Heart right ventricle (tissue), 16 donors: ENCODE measurements at regions of chr1 and their contacts with region 1.

Region 1: GRCh38 chr1:11645670-11646265 is 8.5 kb downstream of the FBXO2 start:
- DNase-seq: peak; percentile 69 to 82
- ATAC-seq: peak in 7 of 8 donors; percentile 30 to 59 (median 46)
- H3K4me3 ChIP-seq: no peak overlapping the region
- H3K27ac ChIP-seq: no peak overlapping the region
- H3K4me1 ChIP-seq: peaks cover 0 to 39% (median 21%) of the 10 kb centered on the region in 9 donors
- H3K27me3 ChIP-seq: peaks cover 3 to 71% (median 33%) of the 10 kb centered on the region in 7 donors
- CTCF ChIP-seq: peak; percentile 63 to 85 (median 81)

Region 2: GRCh38 chr1:11045428-11046269 is 600.1 kb before region 1 on chr1:
- intact Hi-C with region 1: loop called in 1 of 10 experiments (anchors 10 kb)
- DNase-seq: no peak
- ATAC-seq: peak in 1 of 8 donors; percentile 13
- H3K4me3 ChIP-seq: no peak overlapping the region
- H3K27ac ChIP-seq: no peak overlapping the region
- H3K4me1 ChIP-seq: no peaks in the 10 kb centered on the region
- H3K27me3 ChIP-seq: no peaks in the 10 kb centered on the region
- CTCF ChIP-seq: no peak

Region 3: GRCh38 chr1:11248155-11248554 is 397.6 kb before region 1 on chr1:
- intact Hi-C with region 1: loop called in 7 of 10 experiments (anchors 2 to 5 kb)
- DNase-seq: no peak
- ATAC-seq: no peak
- H3K4me3 ChIP-seq: no peak overlapping the region
- H3K27ac ChIP-seq: no peak overlapping the region
- H3K4me1 ChIP-seq: no peaks in the 10 kb centered on the region
- H3K27me3 ChIP-seq: no peaks in the 10 kb centered on the region
- CTCF ChIP-seq: no peak

Region 4: DNA sequence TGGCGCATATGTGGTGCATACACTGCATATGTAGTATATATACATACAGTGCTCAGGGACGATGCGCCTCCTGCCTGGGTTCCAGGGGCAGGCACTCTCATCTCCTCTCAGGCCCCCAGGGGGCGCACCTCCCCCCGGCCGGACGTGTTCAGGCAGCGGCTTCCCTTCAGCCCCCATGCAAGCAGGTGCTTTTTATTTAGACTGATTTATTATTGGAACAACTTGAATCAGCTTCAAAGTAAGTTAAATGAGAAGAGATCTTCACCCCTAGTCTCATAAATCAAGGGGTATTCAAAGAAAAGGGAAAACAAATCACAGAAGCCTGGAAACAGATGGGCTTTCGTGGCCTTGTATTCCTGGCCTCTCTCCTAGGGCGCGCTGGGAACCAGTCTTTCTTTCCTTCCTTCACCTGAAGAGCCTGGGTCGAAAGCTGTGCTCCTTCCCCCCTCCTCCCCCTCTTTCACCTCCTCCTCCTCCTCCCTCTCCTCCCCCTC is 308.1 kb before region 1 on chr1:
- intact Hi-C with region 1: loop called (anchors 2 to 10 kb)
- DNase-seq: peak; percentile 21 to 33
- ATAC-seq: peak in 1 of 8 donors; percentile 53
- H3K4me3 ChIP-seq: no peak overlapping the region
- H3K27ac ChIP-seq: no peak overlapping the region
- H3K4me1 ChIP-seq: peaks cover 0 to 3% (median 0%) of the 10 kb centered on the region in 9 donors
- H3K27me3 ChIP-seq: peaks cover 4 to 79% (median 44%) of the 10 kb centered on the region in 7 donors
- CTCF ChIP-seq: peak; percentile 37 to 79 (median 74)

Region 5: GRCh38 chr1:11522400-11523235 is 123.2 kb before region 1 on chr1:
- intact Hi-C with region 1: no loop called
- DNase-seq: no peak
- ATAC-seq: no peak
- H3K4me3 ChIP-seq: no peak overlapping the region
- H3K27ac ChIP-seq: no peak overlapping the region
- H3K4me1 ChIP-seq: no peaks in the 10 kb centered on the region
- H3K27me3 ChIP-seq: peaks cover 0 to 10% (median 0%) of the 10 kb centered on the region in 7 donors
- CTCF ChIP-seq: no peak

Region 6: DNA sequence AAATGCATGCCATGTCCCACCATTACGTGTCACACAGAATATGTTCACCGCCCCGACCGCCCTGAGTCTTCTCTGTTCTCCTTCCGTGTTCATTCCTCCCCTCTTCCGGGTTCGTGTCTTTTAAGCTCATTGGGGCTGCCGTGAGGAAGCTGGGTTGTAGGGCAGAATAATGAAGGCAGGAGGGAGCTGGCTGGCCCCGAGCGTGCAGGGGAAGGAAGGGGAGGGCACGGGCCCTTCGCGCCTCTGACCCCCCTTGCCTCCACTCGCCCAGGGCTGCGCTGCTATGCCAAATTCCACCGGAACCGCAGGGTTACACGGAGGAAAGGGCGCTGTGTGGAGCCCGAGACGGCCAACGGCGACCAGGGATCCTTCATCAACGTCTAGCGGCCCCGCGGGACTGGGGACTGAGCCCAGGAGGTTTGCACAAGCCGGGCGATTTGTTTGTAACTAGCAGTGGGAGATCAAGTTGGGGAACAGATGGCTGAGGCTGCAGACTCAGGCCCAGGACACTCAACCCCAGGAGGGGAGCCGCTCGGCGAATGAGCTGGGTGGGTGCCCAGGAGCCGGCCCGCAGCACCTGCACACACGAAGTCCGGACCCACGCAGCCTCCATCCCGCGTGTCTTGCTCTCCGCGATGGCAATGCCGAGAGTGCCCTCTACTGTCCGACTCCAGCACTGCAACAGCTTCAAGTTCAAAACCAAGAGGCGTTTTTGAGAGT is 73.7 kb after region 1 on chr1:
- intact Hi-C with region 1: loop called in 5 of 10 experiments (anchors 1 to 5 kb)
- DNase-seq: peak; percentile 78 to 84
- ATAC-seq: peak; percentile 77 to 91 (median 83)
- H3K4me3 ChIP-seq: peak overlapping the region in 9 of 10 donors; percentile 14 to 55 (median 46)
- H3K27ac ChIP-seq: peak overlapping the region in 6 of 10 donors; percentile 10 to 83 (median 38)
- H3K4me1 ChIP-seq: peaks cover 0 to 18% (median 10%) of the 10 kb centered on the region in 9 donors
- H3K27me3 ChIP-seq: peaks cover 0 to 29% (median 0%) of the 10 kb centered on the region in 7 donors
- CTCF ChIP-seq: peak; percentile 86 to 99 (median 98)